ENCODE measurements at regions of chr13 and their contacts with region 1.

Region 1: GRCh38 chr13:41231786-41232185 is 31.6 kb downstream of the MTRF1 start:
- DNase-seq: no peak
- ATAC-seq: no peak
- H3K4me3 ChIP-seq: no peak overlapping the region
- H3K27ac ChIP-seq: no peak overlapping the region
- H3K4me1 ChIP-seq: no peaks in the 10 kb centered on the region
- H3K27me3 ChIP-seq: no peaks in the 10 kb centered on the region
- CTCF ChIP-seq: no peak

Region 2: GRCh38 chr13:40764587-40765403 is 467.0 kb before region 1 on chr13:
- CTCF ChIA-PET with region 1: no interaction called
- POLR2A ChIA-PET with region 1: no interaction called
- in situ Hi-C with region 1: no loop called
- intact Hi-C with region 1: no loop called
- DNase-seq: no peak
- ATAC-seq: no peak
- H3K4me3 ChIP-seq: no peak overlapping the region
- H3K27ac ChIP-seq: no peak overlapping the region
- H3K4me1 ChIP-seq: no peaks in the 10 kb centered on the region
- H3K27me3 ChIP-seq: no peaks in the 10 kb centered on the region
- CTCF ChIP-seq: no peak

Region 3: DNA sequence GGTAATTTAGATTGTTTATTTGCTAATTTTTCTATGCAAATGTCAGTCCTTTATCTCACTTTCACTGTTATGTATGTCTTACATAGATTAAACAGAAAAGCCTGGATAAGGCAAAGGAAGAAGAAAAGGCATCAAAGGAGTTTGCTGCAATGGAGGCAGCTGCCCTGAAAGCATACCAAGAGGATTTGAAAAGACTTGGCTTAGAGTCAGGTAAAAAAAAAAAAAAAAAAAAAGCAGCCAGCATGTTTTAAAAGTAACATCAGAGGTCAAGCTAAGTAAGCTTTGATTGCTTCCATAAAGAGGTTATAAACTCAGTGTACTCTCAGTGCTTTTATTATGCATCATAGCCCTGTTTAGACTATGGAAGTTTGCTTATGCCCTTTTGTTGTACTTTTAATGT is 166.7 kb before region 1 on chr13:
- CTCF ChIA-PET with region 1: no interaction called
- POLR2A ChIA-PET with region 1: interaction called, 14 read pairs
- in situ Hi-C with region 1: no loop called
- intact Hi-C with region 1: no loop called
- DNase-seq: no peak
- ATAC-seq: no peak
- H3K4me3 ChIP-seq: no peak overlapping the region
- H3K27ac ChIP-seq: no peak overlapping the region
- H3K4me1 ChIP-seq: peaks cover 14% of the 10 kb centered on the region
- H3K27me3 ChIP-seq: no peaks in the 10 kb centered on the region
- CTCF ChIP-seq: no peak

Measured in Panc1 (cell line).